A549 (cell line): ENCODE measurements at regions of chr14 and their contacts with region 1.

Region 1: DNA sequence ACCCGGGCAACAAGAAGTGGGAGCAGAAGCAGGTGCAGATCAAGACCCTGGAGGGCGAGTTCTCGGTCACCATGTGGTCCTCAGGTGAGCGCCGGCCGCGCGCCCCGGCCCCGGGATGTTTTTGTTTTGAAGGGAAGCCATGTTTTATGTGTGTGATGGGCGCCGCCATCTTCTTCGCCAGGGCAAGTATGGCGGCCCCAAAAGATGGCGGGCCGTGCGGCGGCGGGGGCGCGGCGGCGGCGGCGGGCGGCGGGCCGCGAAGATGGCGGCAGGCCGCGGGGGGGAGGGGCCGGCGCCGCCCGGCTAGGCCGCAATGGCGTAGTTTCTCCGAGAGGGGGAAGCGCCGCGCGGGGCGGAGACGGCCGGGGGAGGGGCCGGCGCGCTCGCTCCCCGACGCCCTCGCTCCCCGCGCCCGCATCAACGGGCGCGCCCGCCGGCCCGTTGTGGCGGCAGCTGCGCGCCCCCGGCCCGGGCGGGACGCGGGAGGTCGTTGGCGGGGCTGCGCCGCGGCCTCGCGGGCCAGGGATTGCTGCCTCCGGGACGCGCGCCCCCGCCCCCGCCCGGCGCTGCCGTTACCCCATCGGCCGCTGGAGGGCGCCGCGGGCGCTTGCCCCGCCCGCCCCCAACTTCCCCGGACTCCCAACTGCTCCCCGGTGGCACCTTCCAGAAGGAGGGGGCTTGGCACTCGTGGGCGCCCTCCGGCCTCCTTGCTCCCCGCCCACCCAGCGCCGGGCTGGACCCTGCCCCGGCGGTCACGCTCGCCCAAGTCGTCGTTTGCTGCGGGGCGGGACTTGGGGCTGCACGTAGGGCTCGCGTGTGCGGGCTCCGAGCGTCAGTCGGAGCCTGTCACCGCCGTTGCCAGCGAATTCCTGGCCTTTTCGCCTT is 1.1 kb downstream of the YY1 start:
- DNase-seq: peak; percentile 62 to 91
- ATAC-seq: peak; percentile 63 to 81
- H3K4me3 ChIP-seq: peak overlapping the region; percentile 66
- H3K27ac ChIP-seq: peak overlapping the region; percentile 96 to 98
- H3K4me1 ChIP-seq: peaks cover 42% of the 10 kb centered on the region
- CTCF ChIP-seq: peak; percentile 96
- EP300 ChIP-seq: no peak
- POLR2A ChIP-seq: peak; percentile 26; the same call in 1 of the 2 replicates
- RAD21 ChIP-seq: peak in 1 of 2 experiments; percentile 28; a peak in 2 of 5 replicates

Region 2: DNA sequence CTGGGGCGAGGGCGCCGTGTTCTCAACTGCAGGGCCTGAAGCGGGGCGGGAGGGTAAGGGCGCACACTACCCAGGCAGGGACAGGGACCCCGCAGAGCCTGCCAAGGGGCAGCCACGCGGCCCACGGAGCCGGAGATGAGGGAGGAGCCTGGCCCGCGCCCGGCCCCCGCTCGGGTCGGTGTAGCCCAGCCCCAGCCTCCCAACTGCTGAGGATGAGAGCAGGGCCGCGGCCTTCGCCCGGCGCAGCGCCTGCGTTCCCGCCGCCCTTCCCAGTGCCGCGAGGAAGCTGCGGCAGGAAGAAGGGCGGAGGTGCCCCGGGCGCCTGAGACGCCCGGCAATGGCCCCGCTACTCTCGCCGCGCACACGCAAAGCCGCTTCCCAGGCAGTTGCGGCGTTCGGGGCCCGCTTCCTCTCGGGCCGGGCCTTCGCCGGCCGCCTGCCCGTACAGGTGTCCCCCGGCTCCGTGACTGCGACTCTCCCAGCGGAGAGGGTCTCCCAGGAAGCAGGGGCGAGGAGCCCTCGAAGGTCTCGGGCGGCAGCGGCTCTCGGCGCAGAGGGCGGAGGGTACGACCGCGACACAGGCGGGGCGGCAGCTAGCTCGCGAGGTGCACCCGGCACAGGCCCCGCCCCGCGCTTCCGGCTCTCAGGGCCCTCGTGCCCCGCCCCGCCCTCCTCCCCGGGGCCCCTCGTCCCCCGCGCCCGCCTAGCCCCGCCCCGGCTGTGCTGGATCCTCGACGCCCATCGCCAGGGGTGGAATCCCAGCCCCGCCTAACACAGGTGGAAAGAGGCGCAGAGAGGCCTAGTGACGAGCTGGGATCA is 25.9 kb before region 1 on chr14:
- CTCF ChIA-PET with region 1: interaction called, 10 read pairs
- POLR2A ChIA-PET with region 1: interaction called, 6 read pairs
- DNase-seq: peak; percentile 86 to 87
- ATAC-seq: peak; percentile 96 to 97
- H3K4me3 ChIP-seq: peak overlapping the region; percentile 93
- H3K27ac ChIP-seq: peak overlapping the region; percentile 96 to 98
- H3K4me1 ChIP-seq: peaks cover 16% of the 10 kb centered on the region
- CTCF ChIP-seq: no peak
- EP300 ChIP-seq: no peak
- POLR2A ChIP-seq: peak; percentile 87
- RAD21 ChIP-seq: peak in 1 of 2 experiments; percentile 29; a peak in 1 of 5 replicates

Region 3: DNA sequence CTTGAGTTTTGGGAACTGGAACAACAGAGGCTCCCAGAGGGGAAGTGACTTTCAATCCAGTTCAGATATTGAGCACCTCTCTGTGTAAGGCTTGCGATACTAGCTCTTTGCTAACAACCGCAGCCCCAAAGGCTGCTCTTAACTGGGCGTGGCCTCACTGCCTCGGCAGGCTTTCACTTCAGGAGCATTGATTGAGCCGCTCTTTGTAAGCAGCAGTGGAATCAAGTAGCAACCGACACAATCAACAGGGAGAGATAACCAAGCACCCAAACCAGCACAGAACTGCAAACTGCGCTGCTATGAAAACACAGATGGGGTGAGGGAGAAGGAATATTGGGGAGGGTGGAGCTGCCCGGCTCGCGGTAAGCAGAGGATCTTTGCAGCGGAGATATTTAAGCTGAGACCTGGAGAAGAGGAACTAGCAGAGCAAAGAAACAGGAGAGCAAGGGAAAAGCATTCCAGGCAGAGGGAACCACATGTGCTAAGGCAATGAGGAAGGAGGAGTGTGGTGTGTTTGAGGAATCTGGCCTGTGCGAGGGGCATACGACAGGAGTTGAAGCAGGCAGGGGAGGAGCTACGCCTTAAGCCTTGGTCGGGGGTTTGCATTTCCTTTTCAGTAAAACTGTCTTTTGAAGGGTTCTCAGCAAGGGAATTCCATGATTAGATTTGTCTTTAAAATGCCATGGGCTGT is 18.4 kb before region 1 on chr14:
- CTCF ChIA-PET with region 1: interaction called, 11 read pairs
- POLR2A ChIA-PET with region 1: interaction called, 3 read pairs
- DNase-seq: no peak
- ATAC-seq: peak; percentile 64 to 69; a peak in 5 of 6 replicates
- H3K4me3 ChIP-seq: peak overlapping the region; percentile 36
- H3K27ac ChIP-seq: peak overlapping the region; percentile 24 to 40; a peak in 4 of 6 replicates
- H3K4me1 ChIP-seq: peaks cover 5% of the 10 kb centered on the region; the same call in 1 of the 3 replicates
- CTCF ChIP-seq: no peak
- EP300 ChIP-seq: no peak
- POLR2A ChIP-seq: no peak
- RAD21 ChIP-seq: no peak